K562 (cell line): ENCODE measurements at regions of chr12 and their contacts with region 1.

Region 1: DNA sequence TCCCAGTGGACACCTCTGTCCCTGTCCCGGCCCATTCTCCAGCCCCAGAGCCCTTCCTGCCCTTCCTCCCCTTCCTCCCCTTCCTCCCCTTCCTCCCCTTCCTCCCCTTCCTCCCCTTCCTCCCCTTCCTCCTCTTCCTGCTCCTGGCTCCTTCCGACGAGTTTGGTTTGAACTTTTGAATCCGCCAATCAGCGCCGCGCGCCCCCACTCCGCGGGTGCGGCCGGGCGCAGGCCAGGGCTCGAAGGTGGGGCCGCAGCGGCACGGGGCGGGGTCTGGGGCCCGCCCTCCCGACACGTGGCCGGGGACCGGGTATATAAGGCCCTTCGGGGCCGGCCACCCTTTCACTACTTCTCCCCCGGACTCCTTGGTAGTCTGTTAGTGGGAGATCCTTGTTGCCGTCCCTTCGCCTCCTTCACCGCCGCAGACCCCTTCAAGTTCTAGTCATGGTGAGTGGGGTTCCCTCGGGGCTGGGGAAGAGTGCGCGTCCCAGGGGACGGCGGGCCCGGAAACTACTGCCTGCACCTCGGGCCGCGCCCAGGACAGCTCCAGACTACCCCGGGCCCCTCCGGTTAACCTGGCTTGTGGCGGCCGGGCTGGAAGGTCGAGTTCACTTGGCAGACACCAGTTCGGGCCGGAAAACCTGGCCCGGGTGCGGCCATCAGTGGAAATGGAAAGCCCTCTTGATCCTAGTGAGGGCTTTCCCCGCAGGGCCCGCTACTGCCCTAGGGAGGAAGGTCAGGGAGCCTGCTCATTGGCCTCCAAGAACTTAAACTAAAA is at the start of gene TUBA1C:
- DNase-seq: peak; percentile 95 to 99 (median 98)
- ATAC-seq: peak; percentile 85
- H3K4me3 ChIP-seq: peak within 1 kb of the TSS; percentile 90
- H3K27ac ChIP-seq: peak within 1 kb of the TSS; percentile 83
- H3K4me1 ChIP-seq: peaks cover 17 to 23% of the 10 kb centered on the region in 2 experiments
- H3K27me3 ChIP-seq: no peaks in the 10 kb centered on the region
- CTCF ChIP-seq: peak in 1 of 3 experiments; percentile 13; a peak in 1 of 6 replicates
- EP300 ChIP-seq: peak; percentile 15; the same call in 1 of the 2 replicates
- POLR2A ChIP-seq: peak; percentile 100
- RAD21 ChIP-seq: no peak
- polyA plus RNA-seq, gene TUBA1C: 776 to 1,185 TPM

Region 2: DNA sequence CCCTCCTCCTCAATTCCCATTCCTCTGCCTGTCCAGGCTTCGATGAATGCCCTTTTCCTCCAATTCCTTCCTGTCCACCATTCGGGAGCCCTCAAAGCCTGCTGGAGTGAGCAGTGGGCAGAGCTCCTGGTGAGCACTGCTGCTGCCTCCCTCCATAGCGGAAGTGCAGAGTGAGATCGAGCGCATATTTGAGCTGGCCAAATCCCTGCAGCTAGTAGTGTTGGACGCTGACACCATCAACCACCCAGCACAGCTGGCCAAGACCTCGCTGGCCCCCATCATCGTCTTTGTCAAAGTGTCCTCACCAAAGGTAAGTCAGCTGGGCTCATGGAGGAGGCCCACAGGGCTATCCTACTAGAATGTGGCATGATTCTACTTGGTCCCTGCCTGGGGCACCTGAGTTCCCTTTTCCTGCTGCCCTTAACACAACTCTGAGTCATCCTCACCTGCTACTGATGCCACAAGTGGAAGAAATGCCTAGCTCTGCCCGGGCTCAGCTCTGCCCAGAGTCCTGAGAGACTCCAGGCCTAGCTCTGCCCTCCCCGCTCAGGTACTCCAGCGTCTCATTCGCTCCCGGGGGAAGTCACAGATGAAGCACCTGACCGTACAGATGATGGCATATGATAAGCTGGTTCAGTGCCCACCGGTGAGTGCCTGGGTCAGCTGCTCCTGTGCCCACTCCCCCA is 438.6 kb before region 1 on chr12:
- CTCF ChIA-PET with region 1: no interaction called
- POLR2A ChIA-PET with region 1: no interaction called
- in situ Hi-C with region 1: no loop called
- intact Hi-C with region 1: no loop called
- DNase-seq: no peak
- ATAC-seq: no peak
- H3K4me3 ChIP-seq: no peak overlapping the region
- H3K27ac ChIP-seq: no peak overlapping the region
- H3K4me1 ChIP-seq: peaks cover 0 to 12% of the 10 kb centered on the region in 2 experiments; a peak in 2 of 5 replicates
- H3K27me3 ChIP-seq: peaks cover 18 to 24% of the 10 kb centered on the region in 2 experiments; a peak in 4 of 5 replicates
- CTCF ChIP-seq: no peak
- EP300 ChIP-seq: no peak
- POLR2A ChIP-seq: no peak
- RAD21 ChIP-seq: no peak

Region 3: GRCh38 chr12:49069507-49070346 is 195.2 kb before region 1 on chr12 and contains the start of gene RHEBL1:
- CTCF ChIA-PET with region 1: no interaction called
- POLR2A ChIA-PET with region 1: interaction called, 17 read pairs
- in situ Hi-C with region 1: no loop called
- intact Hi-C with region 1: no loop called
- DNase-seq: peak; percentile 99
- ATAC-seq: peak; percentile 100
- H3K4me3 ChIP-seq: peak within 1 kb of the TSS; percentile 96
- H3K27ac ChIP-seq: peak within 1 kb of the TSS; percentile 79
- H3K4me1 ChIP-seq: peaks cover 10 to 18% of the 10 kb centered on the region in 2 experiments; a peak in 4 of 5 replicates
- H3K27me3 ChIP-seq: no peaks in the 10 kb centered on the region
- CTCF ChIP-seq: peak; percentile 43 to 58 (median 57)
- EP300 ChIP-seq: no peak
- POLR2A ChIP-seq: peak; percentile 74
- RAD21 ChIP-seq: no peak
- polyA plus RNA-seq, gene RHEBL1: 27.4 to 36.1 TPM

Region 4: GRCh38 chr12:49130151-49131050 is 134.5 kb before region 1 on chr12:
- CTCF ChIA-PET with region 1: no interaction called
- POLR2A ChIA-PET with region 1: interaction called, 76 read pairs
- in situ Hi-C with region 1: no loop called
- intact Hi-C with region 1: loop called (anchors 10 kb)
- DNase-seq: peak; percentile 79 to 97 (median 87)
- ATAC-seq: peak; percentile 74
- H3K4me3 ChIP-seq: peak overlapping the region; percentile 84
- H3K27ac ChIP-seq: peak overlapping the region; percentile 96
- H3K4me1 ChIP-seq: peaks cover 17 to 27% of the 10 kb centered on the region in 2 experiments; a peak in 4 of 5 replicates
- H3K27me3 ChIP-seq: no peaks in the 10 kb centered on the region
- CTCF ChIP-seq: peak; percentile 89 to 96 (median 89)
- EP300 ChIP-seq: peak; percentile 62; the same call in 1 of the 2 replicates
- POLR2A ChIP-seq: no peak
- RAD21 ChIP-seq: peak; percentile 66 to 72

Region 5: GRCh38 chr12:49232940-49233841 is 31.7 kb before region 1 on chr12:
- CTCF ChIA-PET with region 1: interaction called, 5 read pairs
- POLR2A ChIA-PET with region 1: interaction called, 38 read pairs
- in situ Hi-C with region 1: no loop called
- intact Hi-C with region 1: loop called (anchors 2 kb)
- DNase-seq: peak; percentile 85 to 98 (median 89)
- ATAC-seq: peak; percentile 90
- H3K4me3 ChIP-seq: peak overlapping the region; percentile 34
- H3K27ac ChIP-seq: peak overlapping the region; percentile 87
- H3K4me1 ChIP-seq: peaks cover 27 to 40% of the 10 kb centered on the region in 2 experiments
- H3K27me3 ChIP-seq: no peaks in the 10 kb centered on the region
- CTCF ChIP-seq: peak; percentile 45 to 62 (median 57)
- EP300 ChIP-seq: peak; percentile 88
- POLR2A ChIP-seq: no peak
- RAD21 ChIP-seq: peak; percentile 16 to 29; a peak in 2 of 4 replicates

Region 6: DNA sequence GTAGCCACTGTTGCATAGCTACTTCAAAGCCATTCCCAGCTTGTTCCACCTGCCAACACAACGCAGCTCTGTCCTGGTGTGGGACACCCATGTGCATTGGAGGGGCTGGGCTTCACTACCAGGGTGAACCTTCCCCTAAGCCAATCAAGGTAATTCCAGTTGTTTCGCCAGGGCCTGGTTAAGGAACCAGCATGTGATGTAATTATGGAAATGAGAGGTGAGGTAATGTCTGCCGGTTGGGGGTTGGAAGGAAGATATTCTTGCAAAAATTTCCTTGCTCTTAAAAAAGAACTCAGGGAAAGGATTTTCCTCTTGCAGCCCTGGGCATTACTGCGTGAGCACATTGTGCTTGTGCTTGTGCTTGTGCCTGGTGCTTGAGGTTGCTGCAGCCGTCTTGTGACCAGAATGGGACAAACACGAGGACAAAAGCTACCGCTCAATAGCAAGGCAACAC is 14.8 kb after region 1 on chr12:
- CTCF ChIA-PET with region 1: no interaction called
- POLR2A ChIA-PET with region 1: interaction called, 141 read pairs
- in situ Hi-C with region 1: no loop called
- intact Hi-C with region 1: no loop called
- DNase-seq: peak in 1 of 4 experiments; percentile 5
- ATAC-seq: no peak
- H3K4me3 ChIP-seq: no peak overlapping the region
- H3K27ac ChIP-seq: no peak overlapping the region
- H3K4me1 ChIP-seq: peaks cover 13 to 16% of the 10 kb centered on the region in 2 experiments
- H3K27me3 ChIP-seq: no peaks in the 10 kb centered on the region
- CTCF ChIP-seq: no peak
- EP300 ChIP-seq: no peak
- POLR2A ChIP-seq: no peak
- RAD21 ChIP-seq: no peak

Region 7: DNA sequence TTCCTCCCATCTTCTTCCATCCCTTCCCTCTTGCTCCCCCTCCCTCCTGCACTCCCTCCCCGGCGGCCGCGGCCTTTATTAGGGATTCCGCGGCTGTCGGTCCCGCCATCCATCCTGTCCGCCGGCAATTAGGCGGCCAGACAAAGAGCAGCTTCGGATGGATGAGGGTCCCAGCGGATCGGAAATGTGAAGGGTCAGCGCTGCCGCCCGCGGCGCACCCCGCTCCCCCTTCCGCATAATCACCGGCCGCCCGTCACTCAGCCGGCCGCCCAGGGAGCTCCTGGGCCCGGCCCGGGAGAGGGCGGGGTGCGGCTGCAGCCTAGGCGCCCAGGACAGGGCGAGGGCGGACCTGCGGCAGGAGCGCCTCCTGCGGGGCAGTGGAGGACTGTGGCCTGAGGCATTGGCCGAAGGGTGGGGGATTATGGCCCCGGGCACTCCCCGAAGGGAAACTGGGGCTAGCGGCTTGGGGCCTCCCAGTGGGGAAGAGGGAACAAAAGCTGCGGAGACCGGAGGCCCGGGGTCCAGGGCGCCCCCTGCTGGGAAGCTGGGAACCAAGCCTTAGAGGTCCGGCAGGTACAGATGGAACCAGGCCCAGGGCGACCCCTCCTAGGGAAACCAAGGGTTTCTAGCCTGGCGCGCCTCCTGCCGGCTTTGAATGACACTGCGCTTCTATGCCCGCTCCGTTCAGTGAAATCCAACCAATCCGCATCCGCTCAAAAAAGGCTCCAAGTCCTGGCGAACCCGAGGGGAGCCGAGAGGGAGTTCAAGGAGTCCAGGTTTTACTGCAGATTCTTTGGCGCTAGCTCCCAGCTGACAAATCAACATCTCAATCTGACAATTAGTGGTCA is 77.4 kb after region 1 on chr12:
- CTCF ChIA-PET with region 1: interaction called, 3 read pairs
- POLR2A ChIA-PET with region 1: interaction called, 27 read pairs
- in situ Hi-C with region 1: no loop called
- intact Hi-C with region 1: no loop called
- DNase-seq: peak; percentile 94 to 96 (median 94)
- ATAC-seq: peak; percentile 87
- H3K4me3 ChIP-seq: peak overlapping the region; percentile 41
- H3K27ac ChIP-seq: no peak overlapping the region
- H3K4me1 ChIP-seq: peaks cover 31 to 62% of the 10 kb centered on the region in 2 experiments
- H3K27me3 ChIP-seq: peaks cover 24 to 26% of the 10 kb centered on the region in 2 experiments; a peak in 4 of 5 replicates
- CTCF ChIP-seq: peak; percentile 98 to 99 (median 98)
- EP300 ChIP-seq: peak; percentile 21; the same call in 1 of the 2 replicates
- POLR2A ChIP-seq: no peak
- RAD21 ChIP-seq: peak; percentile 86 to 94

Region 8: DNA sequence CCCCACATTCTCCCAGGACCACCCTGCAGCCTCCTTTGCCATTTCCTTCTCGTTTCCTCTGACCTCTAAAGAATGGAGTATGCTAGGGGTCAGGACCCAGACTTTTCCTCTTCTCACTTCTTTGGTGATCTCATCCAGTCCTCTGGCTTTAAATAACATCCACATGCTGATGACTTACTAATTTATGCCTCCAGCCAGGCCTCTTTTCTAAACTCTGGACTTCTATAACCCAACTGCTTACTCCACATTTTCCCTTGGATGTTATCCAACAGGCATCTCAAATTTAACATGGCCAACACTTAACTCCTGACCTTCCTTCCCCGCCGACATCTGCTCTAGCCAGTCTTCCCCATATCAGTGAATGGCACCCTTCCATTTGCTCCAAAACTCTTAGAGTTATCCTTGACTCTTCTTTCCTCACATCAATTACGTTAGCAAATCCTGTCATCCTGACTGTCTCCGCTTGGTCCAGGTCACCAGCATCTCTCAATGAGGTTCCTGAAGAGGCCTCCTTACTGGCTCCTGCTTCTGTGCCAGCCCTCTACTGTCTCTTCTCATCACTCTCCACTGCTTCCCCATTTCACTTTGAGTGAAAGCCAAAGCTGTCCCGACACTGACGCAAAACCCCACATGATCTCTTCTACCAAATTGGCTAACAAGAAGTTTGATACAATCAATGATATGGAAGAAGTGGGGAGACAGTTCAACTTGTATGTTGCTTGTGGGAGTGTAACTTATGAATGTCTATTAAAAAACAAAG is 519.2 kb after region 1 on chr12:
- CTCF ChIA-PET with region 1: no interaction called
- POLR2A ChIA-PET with region 1: no interaction called
- in situ Hi-C with region 1: no loop called
- intact Hi-C with region 1: no loop called
- DNase-seq: peak in 1 of 4 experiments; percentile 24
- ATAC-seq: peak; percentile 71
- H3K4me3 ChIP-seq: no peak overlapping the region
- H3K27ac ChIP-seq: no peak overlapping the region; the same call in 2 of the 3 replicates
- H3K4me1 ChIP-seq: peaks cover 7 to 13% of the 10 kb centered on the region in 2 experiments; a peak in 4 of 5 replicates
- H3K27me3 ChIP-seq: no peaks in the 10 kb centered on the region
- CTCF ChIP-seq: no peak
- EP300 ChIP-seq: no peak
- POLR2A ChIP-seq: no peak
- RAD21 ChIP-seq: no peak